IMR-90 (cell line): ENCODE measurements at regions of chr10 and their contacts with region 1.

Region 1: GRCh38 chr10:96395931-96396877 is 37.4 kb upstream of the OPALIN start:
- DNase-seq: peak; percentile 67
- ATAC-seq: peak; percentile 95
- H3K4me3 ChIP-seq: no peak overlapping the region
- H3K27ac ChIP-seq: no peak overlapping the region
- H3K4me1 ChIP-seq: no peaks in the 10 kb centered on the region
- H3K27me3 ChIP-seq: peaks cover 39% of the 10 kb centered on the region
- CTCF ChIP-seq: peak; percentile 84
- POLR2A ChIP-seq: no peak
- RAD21 ChIP-seq: peak; percentile 80

Region 2: DNA sequence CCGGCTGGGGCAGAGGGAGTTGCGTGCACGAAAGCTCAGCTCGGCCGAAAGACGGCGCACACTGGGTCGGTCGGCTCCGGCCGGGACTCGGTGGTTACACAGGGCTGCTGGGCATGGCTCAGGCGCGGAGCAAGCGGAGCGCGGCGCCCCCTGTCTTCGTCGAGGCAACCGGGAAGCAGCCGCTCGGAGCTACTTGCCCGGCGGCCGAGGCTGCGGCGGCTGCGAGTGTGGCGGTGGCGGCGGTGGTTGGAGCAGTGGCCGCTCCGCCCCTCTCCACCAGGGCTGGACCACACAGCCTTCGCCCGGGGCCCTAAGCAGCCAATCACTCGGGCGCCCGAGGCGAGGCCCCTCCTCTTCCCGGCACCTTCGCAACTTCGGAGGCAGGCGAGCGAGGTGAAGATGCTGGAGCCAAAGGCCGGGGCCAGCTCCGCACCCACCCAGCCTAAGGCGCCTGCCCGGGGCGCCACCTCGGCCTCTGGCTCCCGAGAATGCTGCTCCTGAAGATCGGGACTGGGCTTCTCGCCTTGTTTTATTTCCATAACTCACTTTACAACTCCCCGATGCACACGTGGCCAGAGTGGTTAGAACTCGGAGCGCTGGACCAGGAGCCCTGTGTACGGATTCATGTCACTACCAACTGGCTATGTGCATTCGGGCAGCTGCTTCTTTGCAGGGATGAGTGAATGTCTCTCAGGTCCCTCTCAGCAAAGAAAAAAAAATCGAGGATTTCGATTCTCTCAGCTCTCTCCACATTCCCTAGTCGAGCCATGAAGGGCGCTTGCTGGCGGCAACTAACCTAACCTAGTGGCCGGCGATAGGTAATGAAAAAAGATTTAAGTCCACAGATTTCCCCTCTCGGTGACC is 117.7 kb after region 1 on chr10 and contains the start of gene TLL2:
- CTCF ChIA-PET with region 1: interaction called, 5 read pairs
- POLR2A ChIA-PET with region 1: no interaction called
- dilution Hi-C with region 1: no loop called
- in situ Hi-C with region 1: loop called (anchors 10 kb)
- intact Hi-C with region 1: loop called (anchors 1 kb)
- DNase-seq: peak; percentile 84
- ATAC-seq: peak; percentile 95
- H3K4me3 ChIP-seq: peak within 1 kb of the TSS; percentile 32
- H3K27ac ChIP-seq: no peak within 1 kb of the TSS
- H3K4me1 ChIP-seq: no peaks in the 10 kb centered on the region; the same call in 1 of the 2 replicates
- H3K27me3 ChIP-seq: peaks cover 21% of the 10 kb centered on the region
- CTCF ChIP-seq: peak; percentile 58
- POLR2A ChIP-seq: no peak
- RAD21 ChIP-seq: peak; percentile 34; the same call in 1 of the 2 replicates
- total RNA-seq, gene TLL2: under 0.01 TPM in 2 replicates

Region 3: DNA sequence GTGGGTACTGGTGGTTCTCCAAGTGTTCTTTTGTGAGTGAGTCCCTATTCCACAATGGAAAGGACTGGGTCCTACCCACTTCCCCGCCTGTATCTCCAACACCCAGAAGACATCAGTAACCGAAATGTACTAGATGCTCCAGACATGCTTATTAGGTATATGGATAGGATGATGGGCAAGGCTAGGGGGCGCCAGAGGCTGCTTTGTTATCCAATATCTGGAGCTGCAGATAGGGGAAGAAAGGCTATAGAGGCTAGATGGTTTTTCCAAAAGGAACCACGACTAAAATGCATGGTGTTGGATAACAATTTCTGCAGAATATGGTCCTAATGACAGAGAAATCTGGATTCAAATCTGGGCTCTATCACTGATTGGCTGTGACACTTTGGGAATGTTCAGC is 246.8 kb after region 1 on chr10:
- CTCF ChIA-PET with region 1: interaction called, 3 read pairs
- POLR2A ChIA-PET with region 1: no interaction called
- dilution Hi-C with region 1: no loop called
- in situ Hi-C with region 1: no loop called
- intact Hi-C with region 1: loop called (anchors 5 kb)
- DNase-seq: peak; percentile 31
- ATAC-seq: no peak
- H3K4me3 ChIP-seq: no peak overlapping the region
- H3K27ac ChIP-seq: no peak overlapping the region
- H3K4me1 ChIP-seq: no peaks in the 10 kb centered on the region
- H3K27me3 ChIP-seq: peaks cover 33% of the 10 kb centered on the region
- CTCF ChIP-seq: peak; percentile 66
- POLR2A ChIP-seq: no peak
- RAD21 ChIP-seq: peak; percentile 68

Region 4: DNA sequence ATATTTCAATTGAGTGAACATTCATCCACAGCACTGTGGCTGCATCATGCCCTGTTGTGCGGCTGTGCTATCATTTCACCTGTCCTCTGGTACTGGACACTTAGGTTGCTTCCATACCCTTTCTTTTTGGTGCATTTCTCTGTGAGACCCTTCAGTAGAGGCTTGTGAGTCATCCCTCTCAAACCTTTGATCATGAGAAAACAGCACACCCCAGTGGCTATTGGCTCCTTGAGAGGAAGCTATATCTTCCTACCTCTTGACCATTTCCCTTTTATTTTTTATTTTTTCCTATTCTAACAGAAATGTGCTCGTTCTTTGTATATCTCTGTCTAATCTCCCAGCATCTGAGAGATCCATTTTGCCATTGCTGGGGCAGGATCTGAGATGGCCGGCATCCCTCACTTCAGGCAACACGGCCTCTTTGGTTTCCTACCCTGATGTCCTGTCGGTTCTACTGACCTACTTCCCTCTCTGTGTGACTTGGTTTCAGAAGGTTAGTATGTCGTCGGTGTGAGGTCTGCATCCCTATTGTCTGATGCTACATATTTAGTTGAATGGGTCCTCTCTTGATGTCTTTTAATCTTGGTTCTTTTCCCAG is 347.9 kb after region 1 on chr10:
- CTCF ChIA-PET with region 1: no interaction called
- POLR2A ChIA-PET with region 1: no interaction called
- dilution Hi-C with region 1: no loop called
- in situ Hi-C with region 1: no loop called
- intact Hi-C with region 1: loop called (anchors 1 kb)
- DNase-seq: peak; percentile 29
- ATAC-seq: peak; percentile 57
- H3K4me3 ChIP-seq: no peak overlapping the region
- H3K27ac ChIP-seq: no peak overlapping the region
- H3K4me1 ChIP-seq: no peaks in the 10 kb centered on the region
- H3K27me3 ChIP-seq: peaks cover 5% of the 10 kb centered on the region; the same call in 1 of the 2 replicates
- CTCF ChIP-seq: peak; percentile 51
- POLR2A ChIP-seq: no peak
- RAD21 ChIP-seq: peak; percentile 45; the same call in 1 of the 2 replicates

Region 5: DNA sequence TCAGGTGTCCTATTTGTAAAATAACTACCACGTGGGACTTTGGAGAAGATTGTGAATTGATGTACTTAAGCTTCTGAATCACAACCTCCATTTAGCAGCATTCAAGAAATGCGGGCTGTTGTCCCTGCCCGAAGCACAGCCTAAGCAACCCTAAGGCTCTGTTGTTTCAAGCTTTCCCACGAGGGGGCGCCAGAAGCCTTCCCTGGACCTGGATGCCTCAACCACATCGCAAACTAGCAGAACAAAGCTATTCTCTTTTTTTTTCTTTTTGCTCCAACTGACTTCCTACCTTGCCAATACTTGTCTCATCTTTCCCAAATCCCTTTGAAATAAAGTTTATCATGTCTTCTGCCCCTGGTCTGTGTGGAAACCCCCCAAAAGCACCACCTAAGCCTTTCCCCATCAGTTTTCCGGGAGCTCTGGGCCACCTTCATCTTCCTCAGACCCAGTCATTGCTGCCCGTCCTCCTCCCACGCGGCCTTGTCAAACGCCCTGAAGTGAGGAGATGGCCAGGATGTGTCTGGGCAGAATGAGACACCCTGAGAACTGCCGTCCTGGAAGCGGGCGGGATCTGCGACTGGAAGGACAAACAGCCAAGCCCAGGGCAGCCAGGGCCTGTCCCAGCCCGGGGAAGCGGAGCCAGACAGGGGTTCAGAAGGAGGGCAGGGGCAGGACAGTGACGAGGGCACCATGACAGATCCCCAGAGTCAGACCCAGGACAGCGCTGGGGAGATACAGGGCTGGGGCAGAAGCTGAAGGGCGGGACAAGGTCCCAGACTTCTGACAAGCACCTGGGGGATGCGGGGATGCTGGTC is 676.9 kb after region 1 on chr10:
- CTCF ChIA-PET with region 1: no interaction called
- POLR2A ChIA-PET with region 1: no interaction called
- dilution Hi-C with region 1: no loop called
- in situ Hi-C with region 1: no loop called
- intact Hi-C with region 1: loop called (anchors 5 kb)
- DNase-seq: peak; percentile 71
- ATAC-seq: peak; percentile 96
- H3K4me3 ChIP-seq: no peak overlapping the region
- H3K27ac ChIP-seq: no peak overlapping the region
- H3K4me1 ChIP-seq: no peaks in the 10 kb centered on the region
- H3K27me3 ChIP-seq: peaks cover 50% of the 10 kb centered on the region
- CTCF ChIP-seq: peak; percentile 94
- POLR2A ChIP-seq: 0 out of 2 replicates have a peak, but pooled peaks have one; percentile 29
- RAD21 ChIP-seq: peak; percentile 93

Region 6: DNA sequence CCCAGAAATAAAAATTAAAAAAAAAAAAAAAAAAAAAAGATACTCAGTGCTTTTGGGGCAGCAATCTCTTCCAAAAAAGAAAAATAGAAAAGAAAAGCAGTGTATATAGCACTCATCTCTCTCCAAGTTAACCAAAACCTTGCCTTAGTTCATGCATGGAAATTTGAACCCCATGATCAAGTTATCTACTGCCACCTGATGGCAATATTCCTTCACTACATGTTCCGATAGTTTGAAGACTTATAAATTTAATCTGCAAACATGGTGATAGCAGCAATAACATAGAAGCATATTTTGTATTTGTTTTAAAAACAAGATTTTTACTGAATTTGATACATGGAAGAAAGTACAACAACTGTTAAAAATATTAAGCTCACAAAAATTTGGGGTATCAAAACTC is 838.2 kb after region 1 on chr10:
- CTCF ChIA-PET with region 1: no interaction called
- POLR2A ChIA-PET with region 1: no interaction called
- dilution Hi-C with region 1: no loop called
- in situ Hi-C with region 1: no loop called
- intact Hi-C with region 1: loop called (anchors 5 kb)
- DNase-seq: peak; percentile 64
- ATAC-seq: peak; percentile 61
- H3K4me3 ChIP-seq: no peak overlapping the region
- H3K27ac ChIP-seq: no peak overlapping the region
- H3K4me1 ChIP-seq: peaks cover 2% of the 10 kb centered on the region; the same call in 1 of the 2 replicates
- H3K27me3 ChIP-seq: no peaks in the 10 kb centered on the region
- CTCF ChIP-seq: peak; percentile 76
- POLR2A ChIP-seq: no peak
- RAD21 ChIP-seq: peak; percentile 84